Activated CD4-positive, alpha-beta T cell treated with anti-CD3 and anti-CD28 coated beads, Interleukin-2, amount 10 ng/mL, durations not matched to agents 24 days and 14 days (primary cell): ENCODE measurements at regions of chrX and their contacts with region 1.

Region 1: GRCh38 chrX:149470955-149471354 is 34.2 kb downstream of the IDS start:
- DNase-seq: peak; percentile 87
- H3K4me3 Mint-ChIP-seq: no peak overlapping the region
- H3K27ac Mint-ChIP-seq: no peak overlapping the region
- H3K4me1 Mint-ChIP-seq: peaks cover 2% of the 10 kb centered on the region
- H3K27me3 Mint-ChIP-seq: peaks cover 6% of the 10 kb centered on the region

Region 2: DNA sequence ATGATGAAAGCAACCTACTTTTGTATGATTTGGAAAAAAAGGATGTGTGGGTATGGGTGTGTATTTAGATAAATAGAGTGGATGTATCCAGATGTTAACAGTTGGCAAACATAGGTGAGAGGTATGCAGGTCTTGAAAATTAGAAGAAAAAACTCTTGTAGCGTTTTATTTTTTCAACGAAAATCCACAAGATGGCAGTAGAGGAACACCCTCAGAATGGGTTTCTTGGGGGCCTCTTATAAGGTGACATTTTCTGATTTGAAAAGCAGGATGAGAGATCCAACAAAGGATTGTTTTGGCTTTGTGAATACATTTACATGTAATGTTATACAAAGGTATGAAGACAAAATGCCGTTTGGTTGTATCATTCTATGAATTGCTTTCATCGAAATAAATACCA is 1421.5 kb before region 1 on chrX:
- intact Hi-C with region 1: loop called (anchors 1 kb)
- DNase-seq: peak; percentile 54
- H3K4me3 Mint-ChIP-seq: no peak overlapping the region
- H3K27ac Mint-ChIP-seq: no peak overlapping the region
- H3K4me1 Mint-ChIP-seq: no peaks in the 10 kb centered on the region
- H3K27me3 Mint-ChIP-seq: peaks cover 5% of the 10 kb centered on the region

Region 3: GRCh38 chrX:148133105-148133725 is 1337.7 kb before region 1 on chrX:
- intact Hi-C with region 1: loop called (anchors 5 kb)
- DNase-seq: no peak
- H3K4me3 Mint-ChIP-seq: no peak overlapping the region
- H3K27ac Mint-ChIP-seq: no peak overlapping the region
- H3K4me1 Mint-ChIP-seq: no peaks in the 10 kb centered on the region
- H3K27me3 Mint-ChIP-seq: no peaks in the 10 kb centered on the region

Region 4: DNA sequence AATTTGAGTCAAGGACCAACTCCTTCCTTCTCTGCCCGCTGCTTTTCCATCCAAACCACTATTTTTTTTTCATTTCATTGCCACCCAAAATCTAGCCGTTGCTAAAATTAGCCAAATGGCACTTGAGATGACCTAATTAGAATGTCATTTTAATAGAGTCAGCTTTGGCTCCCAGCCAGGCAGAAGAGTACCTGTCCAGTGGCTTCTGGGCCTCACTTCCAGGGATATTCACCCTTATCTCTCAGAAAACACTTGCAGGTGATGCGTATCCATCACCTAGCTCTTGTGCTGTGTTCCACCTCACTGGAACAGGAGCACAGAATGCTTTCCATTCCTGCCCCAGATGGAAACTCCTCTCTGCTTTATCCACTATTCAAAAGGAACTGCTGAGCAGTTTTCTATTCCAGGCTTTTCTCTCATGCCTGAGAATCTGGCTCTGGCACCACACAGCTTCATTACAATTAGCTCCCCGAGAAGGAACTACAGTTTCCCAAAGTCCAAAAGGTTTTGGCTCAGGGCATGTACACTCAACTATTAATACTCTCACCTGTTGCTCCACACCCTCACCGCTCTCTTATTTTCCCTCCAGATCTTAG is 97.8 kb after region 1 on chrX:
- intact Hi-C with region 1: no loop called
- DNase-seq: peak; percentile 7
- H3K4me3 Mint-ChIP-seq: no peak overlapping the region
- H3K27ac Mint-ChIP-seq: no peak overlapping the region
- H3K4me1 Mint-ChIP-seq: peaks cover 18% of the 10 kb centered on the region
- H3K27me3 Mint-ChIP-seq: no peaks in the 10 kb centered on the region